Psoas muscle (tissue), 8 donors: ENCODE measurements at regions of chr20 and their contacts with region 1.

Region 1: DNA sequence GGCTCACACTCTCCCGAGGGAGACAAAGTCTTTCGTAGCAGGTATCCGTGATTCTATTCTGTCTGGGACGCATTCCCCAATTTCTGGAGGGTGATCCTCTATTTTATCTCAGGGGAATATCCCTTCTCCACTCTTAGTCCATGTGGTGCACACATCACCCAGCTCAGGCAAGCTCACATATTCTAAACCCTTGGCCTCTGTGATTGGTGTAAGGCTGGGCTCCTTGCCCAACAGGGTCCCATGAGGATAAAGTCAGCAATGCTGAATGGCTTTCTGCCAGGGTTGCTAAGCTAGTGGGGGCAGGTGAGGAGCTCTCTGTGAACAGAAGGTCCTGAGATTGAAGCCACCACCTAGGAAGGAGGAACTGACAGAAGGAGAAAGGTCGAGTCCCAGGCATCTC is 137.2 kb downstream of the CDH26 start:
- DNase-seq: no peak
- ATAC-seq: no peak
- H3K4me3 ChIP-seq: no peak overlapping the region
- H3K27ac ChIP-seq: no peak overlapping the region
- H3K4me1 ChIP-seq: no peaks in the 10 kb centered on the region
- H3K27me3 ChIP-seq: peaks cover 0 to 2% (median 0%) of the 10 kb centered on the region in 3 donors
- CTCF ChIP-seq: no peak

Region 2: DNA sequence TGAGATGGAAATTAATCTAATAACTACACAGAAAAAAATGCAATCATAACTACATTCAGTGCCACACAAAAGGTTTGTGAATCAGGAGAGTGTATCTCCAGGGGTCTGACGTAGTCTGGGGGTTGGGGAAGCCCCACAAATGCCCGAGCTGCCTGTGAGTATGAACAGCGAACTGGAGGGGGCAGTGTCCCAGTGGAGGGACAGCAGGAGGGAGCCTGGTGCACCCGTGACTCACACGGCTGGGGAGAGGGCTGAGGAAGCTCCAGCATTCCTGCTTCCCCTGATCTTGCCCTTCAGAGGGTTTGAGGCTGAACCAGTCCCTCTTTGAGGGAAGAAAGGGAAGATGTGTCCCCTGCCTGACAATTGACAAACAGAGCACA is 58.3 kb before region 1 on chr20:
- intact Hi-C with region 1: loop called in 1 of 2 experiments (anchors 10 kb)
- DNase-seq: no peak
- ATAC-seq: peak in 1 of 4 donors; percentile 52
- H3K4me3 ChIP-seq: no peak overlapping the region
- H3K27ac ChIP-seq: no peak overlapping the region
- H3K4me1 ChIP-seq: peaks cover 18% of the 10 kb centered on the region
- H3K27me3 ChIP-seq: no peaks in the 10 kb centered on the region
- CTCF ChIP-seq: no peak